ENCODE measurements at regions of chr15 and their contacts with region 1.

Region 1: DNA sequence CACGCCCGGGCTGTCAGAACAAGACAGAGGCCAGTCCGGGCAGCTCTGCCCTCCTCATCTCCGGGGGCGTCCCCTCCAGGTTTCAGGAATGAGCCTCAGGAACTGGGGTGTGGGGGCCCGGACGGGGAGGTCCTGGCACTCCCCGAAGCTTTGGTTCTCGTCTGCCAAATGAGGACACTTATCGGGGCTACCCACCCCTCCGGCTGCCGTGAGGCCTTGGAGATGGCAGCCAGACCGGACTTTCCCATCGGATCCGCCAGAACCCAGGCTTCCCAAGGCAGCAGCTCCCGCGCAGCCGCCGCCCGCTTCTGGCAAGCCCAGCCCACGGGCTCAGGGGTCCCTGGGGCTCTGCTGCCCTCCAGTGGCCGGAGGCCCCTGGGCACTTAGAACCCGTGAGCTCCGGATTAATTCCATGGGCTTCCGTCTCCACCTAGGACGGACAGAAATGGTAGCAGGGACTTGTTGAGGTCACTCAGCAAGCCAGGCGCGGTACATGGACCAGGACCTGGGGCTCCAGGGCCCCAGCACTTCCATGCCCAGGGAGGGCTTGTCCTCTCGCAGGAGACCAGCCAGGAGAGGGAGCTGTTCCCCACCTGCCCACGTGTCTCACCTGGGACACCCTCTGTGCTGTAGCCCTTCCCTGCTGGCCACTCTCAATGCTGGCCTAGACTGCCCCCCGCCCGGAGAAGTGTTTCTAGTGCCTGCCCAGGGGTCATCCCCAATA is 89.4 kb downstream of the LINGO1 start:
- DNase-seq: peak; percentile 84 to 86 (median 85)
- ATAC-seq: peak; percentile 92 to 97 (median 96)
- H3K4me3 ChIP-seq: peak overlapping the region; percentile 34 to 49 (median 40)
- H3K27ac ChIP-seq: peak overlapping the region in 1 of 3 donors; percentile 38
- H3K4me1 ChIP-seq: peaks cover 0 to 6% (median 0%) of the 10 kb centered on the region in 4 donors
- H3K27me3 ChIP-seq: no peaks in the 10 kb centered on the region
- CTCF ChIP-seq: peak; percentile 97 to 99 (median 98)
- POLR2A ChIP-seq: no peak

Region 2: GRCh38 chr15:77024271-77025082 is 518.8 kb before region 1 on chr15:
- intact Hi-C with region 1: loop called in 1 of 2 experiments (anchors 10 kb)
- DNase-seq: peak; percentile 63 to 73 (median 72)
- ATAC-seq: peak; percentile 61 to 80 (median 74)
- H3K4me3 ChIP-seq: no peak overlapping the region
- H3K27ac ChIP-seq: no peak overlapping the region
- H3K4me1 ChIP-seq: no peaks in the 10 kb centered on the region
- H3K27me3 ChIP-seq: no peaks in the 10 kb centered on the region
- CTCF ChIP-seq: peak; percentile 83 to 97 (median 96)
- POLR2A ChIP-seq: no peak

Region 3: GRCh38 chr15:77358545-77359240 is 184.6 kb before region 1 on chr15:
- intact Hi-C with region 1: no loop called
- DNase-seq: no peak
- ATAC-seq: no peak
- H3K4me3 ChIP-seq: no peak overlapping the region
- H3K27ac ChIP-seq: no peak overlapping the region
- H3K4me1 ChIP-seq: no peaks in the 10 kb centered on the region
- H3K27me3 ChIP-seq: no peaks in the 10 kb centered on the region
- CTCF ChIP-seq: no peak
- POLR2A ChIP-seq: no peak

Region 4: GRCh38 chr15:77589839-77590238 is 46.5 kb after region 1 on chr15:
- intact Hi-C with region 1: no loop called
- DNase-seq: no peak
- ATAC-seq: peak in 1 of 4 donors; percentile 15
- H3K4me3 ChIP-seq: no peak overlapping the region
- H3K27ac ChIP-seq: no peak overlapping the region
- H3K4me1 ChIP-seq: no peaks in the 10 kb centered on the region
- H3K27me3 ChIP-seq: no peaks in the 10 kb centered on the region
- CTCF ChIP-seq: no peak
- POLR2A ChIP-seq: no peak

Region 5: DNA sequence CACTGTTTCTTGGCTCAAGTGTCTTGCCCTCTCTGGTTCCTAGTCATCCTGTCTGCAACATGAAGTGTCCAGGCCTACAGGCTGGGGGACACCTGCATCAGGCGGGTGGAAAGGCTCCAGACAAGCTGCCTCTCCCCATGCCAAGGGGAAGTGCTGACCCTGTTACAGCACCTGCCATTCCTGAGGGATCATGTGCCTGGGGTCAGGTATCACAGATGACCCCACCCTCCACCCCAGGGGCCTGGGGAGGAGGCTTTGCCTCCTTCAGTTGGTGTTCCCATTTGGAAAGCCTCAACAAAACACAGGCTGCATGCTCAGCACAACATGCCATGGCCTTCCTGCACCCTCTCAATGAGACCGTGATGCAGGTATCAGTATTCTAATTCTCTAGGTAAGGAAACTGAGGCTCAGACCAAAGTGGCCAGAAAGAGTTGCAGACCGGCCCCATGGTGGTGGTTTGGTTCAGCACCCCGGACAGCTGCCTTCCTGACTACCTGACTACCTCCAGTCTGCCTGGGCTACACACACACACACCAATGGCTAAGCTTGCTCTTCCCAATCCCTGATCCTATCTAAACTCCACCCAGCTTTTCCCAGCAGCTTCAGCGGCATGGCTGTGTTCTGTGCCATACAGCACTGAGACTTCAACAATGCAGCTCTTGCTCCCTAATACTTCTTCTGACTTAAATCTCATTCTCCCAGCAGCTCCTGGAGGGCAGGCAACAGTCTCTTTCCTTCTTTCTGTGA is 159.1 kb after region 1 on chr15:
- intact Hi-C with region 1: no loop called
- DNase-seq: peak in 1 of 3 donors; percentile 25
- ATAC-seq: peak in 2 of 4 donors; percentile 23 to 65
- H3K4me3 ChIP-seq: no peak overlapping the region
- H3K27ac ChIP-seq: no peak overlapping the region
- H3K4me1 ChIP-seq: no peaks in the 10 kb centered on the region
- H3K27me3 ChIP-seq: no peaks in the 10 kb centered on the region
- CTCF ChIP-seq: no peak
- POLR2A ChIP-seq: no peak